ENCODE measurements at regions of chr2 and their contacts with region 1.

Region 1: GRCh38 chr2:240586198-240586918 is at the start of gene CAPN10:
- DNase-seq: peak; percentile 99
- H3K4me3 ChIP-seq: peak within 1 kb of the TSS; percentile 69 to 99 (median 91)
- H3K27ac ChIP-seq: peak within 1 kb of the TSS; percentile 92 to 98 (median 96)
- H3K4me1 ChIP-seq: peaks cover 0 to 44% (median 34%) of the 10 kb centered on the region in 4 donors
- H3K27me3 ChIP-seq: no peaks in the 10 kb centered on the region
- CTCF ChIP-seq: no peak
- EP300 ChIP-seq: no peak
- POLR2A ChIP-seq: peak; percentile 41 to 50
- total RNA-seq, gene CAPN10: 10.5 to 27.7 (median 16.3) TPM

Region 2: GRCh38 chr2:240566203-240567136 is 19.9 kb before region 1 on chr2:
- intact Hi-C with region 1: loop called (anchors 2 kb)
- DNase-seq: peak; percentile 98
- H3K4me3 ChIP-seq: peak overlapping the region in 3 of 4 donors; percentile 58 to 85 (median 81)
- H3K27ac ChIP-seq: peak overlapping the region; percentile 93 to 98 (median 96)
- H3K4me1 ChIP-seq: peaks cover 0 to 62% (median 59%) of the 10 kb centered on the region in 4 donors
- H3K27me3 ChIP-seq: no peaks in the 10 kb centered on the region
- CTCF ChIP-seq: peak; percentile 25 to 97 (median 75)
- EP300 ChIP-seq: no peak
- POLR2A ChIP-seq: peak in 1 of 2 donors; percentile 34

Measured in sigmoid colon (tissue), 7 donors.